Caco-2 (cell line): ENCODE measurements at regions of chr1 and their contacts with region 1.

Region 1: DNA sequence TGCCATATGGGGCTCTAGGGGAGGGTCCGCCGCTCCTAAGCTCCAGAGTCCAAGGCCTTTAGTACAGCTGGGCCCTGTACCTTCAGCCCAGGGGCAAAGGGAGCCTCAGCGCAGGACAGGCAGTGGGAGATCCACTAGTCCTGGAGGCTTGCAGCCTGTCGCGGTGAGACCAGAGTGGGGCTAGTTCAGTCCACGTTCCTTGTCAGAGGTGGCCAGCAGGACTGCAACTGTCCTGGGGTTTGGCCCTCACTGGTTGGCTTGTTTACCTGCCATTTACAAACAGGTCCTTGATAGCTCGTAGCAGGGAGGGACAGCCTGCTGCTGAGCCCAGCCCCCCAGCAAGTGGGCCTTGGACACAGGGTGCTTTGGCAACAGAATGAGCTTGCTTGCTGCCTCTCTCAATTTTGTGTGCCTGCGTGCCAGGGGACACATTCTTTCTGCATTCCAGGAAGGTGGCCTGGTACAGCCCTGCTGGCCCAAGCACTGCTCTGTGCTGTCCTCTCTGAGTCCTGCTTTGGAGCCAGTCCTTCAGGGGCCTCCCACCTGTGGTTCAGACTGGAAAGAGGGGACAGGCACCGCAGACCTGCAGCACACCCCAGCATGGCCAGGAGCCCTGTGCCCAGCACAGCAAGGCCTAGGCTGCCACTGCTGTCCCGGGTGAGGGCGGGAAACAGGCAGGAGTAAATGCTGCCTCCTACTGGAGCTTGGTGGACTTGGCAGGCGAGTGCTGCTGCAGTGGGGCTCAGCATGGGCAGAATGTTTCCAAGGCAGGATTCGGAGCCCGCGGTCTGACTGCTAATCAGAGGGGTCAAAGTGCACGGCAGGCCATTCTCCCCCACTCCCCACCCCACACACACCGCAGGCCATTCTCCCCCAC is 15.2 kb downstream of the H6PD start:
- DNase-seq: peak in 1 of 2 experiments; percentile 49
- H3K4me3 ChIP-seq: no peak overlapping the region
- H3K4me3 Mint-ChIP-seq: no peak overlapping the region
- H3K27ac Mint-ChIP-seq: peak overlapping the region; percentile 14
- H3K4me1 ChIP-seq: peaks cover 27% of the 10 kb centered on the region
- H3K4me1 Mint-ChIP-seq: peaks cover 20% of the 10 kb centered on the region
- H3K27me3 ChIP-seq: no peaks in the 10 kb centered on the region
- H3K27me3 Mint-ChIP-seq: no peaks in the 10 kb centered on the region
- CTCF ChIP-seq: peak; percentile 36 to 54

Region 2: GRCh38 chr1:9234223-9235095 is 15.3 kb before region 1 on chr1 and contains the start of gene H6PD:
- CTCF ChIA-PET with region 1: interaction called, 18 read pairs
- POLR2A ChIA-PET with region 1: interaction called, 11 read pairs
- intact Hi-C with region 1: no loop called
- DNase-seq: peak; percentile 87 to 92
- H3K4me3 ChIP-seq: peak within 1 kb of the TSS; percentile 52
- H3K4me3 Mint-ChIP-seq: peak within 1 kb of the TSS; percentile 95
- H3K27ac Mint-ChIP-seq: peak within 1 kb of the TSS; percentile 86
- H3K4me1 ChIP-seq: 0 out of 2 replicates have a peak, but pooled peaks cover 5% of the 10 kb centered on the region
- H3K4me1 Mint-ChIP-seq: peaks cover 11% of the 10 kb centered on the region
- H3K27me3 ChIP-seq: no peaks in the 10 kb centered on the region
- H3K27me3 Mint-ChIP-seq: no peaks in the 10 kb centered on the region
- CTCF ChIP-seq: peak; percentile 74 to 78
- total RNA-seq, gene H6PD: 10.1 and 13.0 TPM in 2 replicates